HCT116 (cell line): ENCODE measurements at regions of chr18 and their contacts with region 1.

Region 1: GRCh38 chr18:1676387-1676786 is 771.7 kb downstream of the ADCYAP1 start:
- DNase-seq: no peak
- ATAC-seq: no peak
- H3K4me3 ChIP-seq: no peak overlapping the region
- H3K27ac ChIP-seq: no peak overlapping the region
- H3K4me1 ChIP-seq: no peaks in the 10 kb centered on the region
- H3K27me3 ChIP-seq: no peaks in the 10 kb centered on the region
- CTCF ChIP-seq: no peak
- POLR2A ChIP-seq: no peak
- RAD21 ChIP-seq: no peak

Region 2: DNA sequence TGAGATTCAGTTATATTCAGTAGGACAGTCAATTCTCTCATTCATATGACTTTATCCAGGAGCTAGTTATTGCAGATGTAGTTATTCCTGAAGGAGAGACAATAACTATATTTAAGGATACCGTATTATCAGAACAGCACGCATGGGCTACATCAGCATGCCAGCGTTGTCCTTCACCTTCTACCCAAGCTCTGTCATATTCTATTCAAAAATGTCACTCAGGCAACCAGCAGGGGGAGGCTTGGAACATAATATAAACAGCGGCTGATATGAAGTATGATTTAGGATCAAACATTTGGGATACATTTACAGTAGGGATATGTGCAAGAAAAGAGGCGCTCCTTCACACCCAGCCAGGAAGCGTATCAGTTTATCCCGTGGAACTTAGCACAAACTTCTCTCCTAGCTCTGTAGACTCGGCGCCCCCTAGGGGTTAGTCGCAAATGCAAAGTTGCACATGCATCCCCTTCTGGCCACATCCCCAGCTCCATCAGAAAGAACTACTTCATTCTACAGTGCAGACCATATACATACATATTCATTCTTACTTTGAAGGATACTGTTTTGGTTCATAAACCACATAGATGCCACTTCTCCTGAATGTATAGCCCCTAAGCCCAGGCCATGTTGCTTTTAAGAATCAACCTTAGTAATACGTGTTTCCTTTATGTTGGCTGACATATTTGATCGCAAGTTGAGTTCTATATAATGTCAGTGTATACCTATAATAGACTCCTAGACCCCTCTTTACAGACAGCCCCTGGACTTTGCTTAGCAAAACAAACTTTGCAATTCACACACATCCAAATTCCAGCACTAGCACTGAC is 12.3 kb before region 1 on chr18:
- CTCF ChIA-PET with region 1: interaction called, 20 read pairs
- POLR2A ChIA-PET with region 1: no interaction called
- RAD21 ChIA-PET with region 1: no interaction called
- intact Hi-C with region 1: no loop called
- DNase-seq: peak; percentile 32
- ATAC-seq: peak; percentile 93
- H3K4me3 ChIP-seq: no peak overlapping the region
- H3K27ac ChIP-seq: no peak overlapping the region
- H3K4me1 ChIP-seq: no peaks in the 10 kb centered on the region
- H3K27me3 ChIP-seq: peaks cover 3% of the 10 kb centered on the region; the same call in 1 of the 2 replicates
- CTCF ChIP-seq: peak; percentile 87 to 98 (median 92)
- POLR2A ChIP-seq: no peak
- RAD21 ChIP-seq: peak; percentile 54

Region 3: DNA sequence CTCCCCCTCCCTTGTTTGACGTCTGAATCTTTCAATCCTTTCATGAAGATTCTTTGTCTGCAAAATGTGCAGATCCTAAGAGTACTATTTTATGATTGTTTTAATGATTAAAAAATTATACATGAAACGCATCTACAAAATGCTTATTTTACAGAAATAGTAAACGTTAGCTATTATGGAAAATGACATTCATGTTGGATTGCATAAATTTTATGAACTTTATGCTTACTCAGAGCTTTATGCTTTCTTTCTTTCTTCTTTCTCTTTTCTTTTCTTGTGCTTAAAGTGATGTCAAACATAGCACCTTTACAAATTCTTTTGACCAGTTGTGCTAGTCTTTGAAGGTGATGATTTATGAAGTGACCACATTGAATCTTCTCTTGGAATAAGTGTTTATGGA is 33.7 kb after region 1 on chr18:
- CTCF ChIA-PET with region 1: no interaction called
- POLR2A ChIA-PET with region 1: no interaction called
- RAD21 ChIA-PET with region 1: no interaction called
- intact Hi-C with region 1: loop called (anchors 5 kb)
- DNase-seq: no peak
- ATAC-seq: no peak
- H3K4me3 ChIP-seq: no peak overlapping the region
- H3K27ac ChIP-seq: no peak overlapping the region
- H3K4me1 ChIP-seq: no peaks in the 10 kb centered on the region
- H3K27me3 ChIP-seq: peaks cover 4% of the 10 kb centered on the region; the same call in 1 of the 2 replicates
- CTCF ChIP-seq: no peak
- POLR2A ChIP-seq: no peak
- RAD21 ChIP-seq: no peak